Caco-2 (cell line): ENCODE measurements at regions of chr2 and their contacts with region 1.

Region 1: GRCh38 chr2:72548081-72548764 is 277.6 kb downstream of the EXOC6B start:
- DNase-seq: peak; percentile 61 to 71
- H3K4me3 ChIP-seq: no peak overlapping the region
- H3K4me3 Mint-ChIP-seq: no peak overlapping the region
- H3K27ac Mint-ChIP-seq: no peak overlapping the region
- H3K4me1 ChIP-seq: peaks cover 34% of the 10 kb centered on the region
- H3K4me1 Mint-ChIP-seq: peaks cover 21% of the 10 kb centered on the region
- H3K27me3 ChIP-seq: no peaks in the 10 kb centered on the region
- H3K27me3 Mint-ChIP-seq: no peaks in the 10 kb centered on the region
- CTCF ChIP-seq: no peak

Region 2: GRCh38 chr2:72220170-72220569 is 328.1 kb before region 1 on chr2:
- CTCF ChIA-PET with region 1: no interaction called
- POLR2A ChIA-PET with region 1: no interaction called
- intact Hi-C with region 1: no loop called
- DNase-seq: peak; percentile 38 to 49
- H3K4me3 ChIP-seq: no peak overlapping the region
- H3K4me3 Mint-ChIP-seq: no peak overlapping the region
- H3K27ac Mint-ChIP-seq: no peak overlapping the region
- H3K4me1 ChIP-seq: no peaks in the 10 kb centered on the region
- H3K4me1 Mint-ChIP-seq: peaks cover 9% of the 10 kb centered on the region
- H3K27me3 ChIP-seq: no peaks in the 10 kb centered on the region
- H3K27me3 Mint-ChIP-seq: no peaks in the 10 kb centered on the region
- CTCF ChIP-seq: peak; percentile 42 to 52

Region 3: GRCh38 chr2:72561621-72562318 is 13.5 kb after region 1 on chr2:
- CTCF ChIA-PET with region 1: no interaction called
- POLR2A ChIA-PET with region 1: no interaction called
- intact Hi-C with region 1: loop called (anchors 1 kb)
- DNase-seq: no peak
- H3K4me3 ChIP-seq: no peak overlapping the region
- H3K4me3 Mint-ChIP-seq: no peak overlapping the region
- H3K27ac Mint-ChIP-seq: peak overlapping the region; percentile 1
- H3K4me1 ChIP-seq: peaks cover 20% of the 10 kb centered on the region
- H3K4me1 Mint-ChIP-seq: peaks cover 16% of the 10 kb centered on the region
- H3K27me3 ChIP-seq: no peaks in the 10 kb centered on the region
- H3K27me3 Mint-ChIP-seq: no peaks in the 10 kb centered on the region
- CTCF ChIP-seq: no peak

Region 4: GRCh38 chr2:72570401-72570800 is 22.2 kb after region 1 on chr2:
- CTCF ChIA-PET with region 1: no interaction called
- POLR2A ChIA-PET with region 1: no interaction called
- intact Hi-C with region 1: loop called (anchors 1 kb)
- DNase-seq: peak in 1 of 2 experiments; percentile 26
- H3K4me3 ChIP-seq: no peak overlapping the region
- H3K4me3 Mint-ChIP-seq: no peak overlapping the region
- H3K27ac Mint-ChIP-seq: peak overlapping the region; percentile 20
- H3K4me1 ChIP-seq: peaks cover 41% of the 10 kb centered on the region
- H3K4me1 Mint-ChIP-seq: peaks cover 18% of the 10 kb centered on the region
- H3K27me3 ChIP-seq: no peaks in the 10 kb centered on the region
- H3K27me3 Mint-ChIP-seq: no peaks in the 10 kb centered on the region
- CTCF ChIP-seq: no peak